MCF 10A (cell line): ENCODE measurements at regions of chr2 and their contacts with region 1.

Region 1: GRCh38 chr2:24435391-24436316 is 55.4 kb upstream of the NCOA1 start:
- DNase-seq: no peak
- H3K4me3 Mint-ChIP-seq: no peak overlapping the region
- H3K27ac Mint-ChIP-seq: no peak overlapping the region
- H3K4me1 Mint-ChIP-seq: no peaks in the 10 kb centered on the region
- H3K27me3 Mint-ChIP-seq: no peaks in the 10 kb centered on the region
- CTCF ChIP-seq: no peak

Region 2: DNA sequence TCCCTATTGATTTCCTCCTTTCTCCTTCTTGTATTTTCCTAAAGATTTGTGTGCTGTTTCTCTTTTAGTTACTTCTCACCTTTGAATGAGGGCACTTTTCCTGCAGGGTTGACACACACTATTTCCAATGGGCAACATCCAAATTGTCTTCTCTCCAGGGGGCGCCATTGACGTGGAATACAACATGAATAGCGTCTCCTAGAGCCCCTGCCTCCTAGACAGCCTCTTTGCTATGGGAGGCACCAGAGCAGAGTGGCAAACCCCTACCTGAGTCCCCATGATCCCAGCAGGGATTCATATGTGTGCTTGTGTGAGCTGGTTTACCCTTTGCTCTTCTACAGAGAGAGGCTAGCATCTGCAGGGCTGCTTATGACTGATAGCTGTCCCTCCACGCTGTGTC is 14.0 kb before region 1 on chr2:
- CTCF ChIA-PET with region 1: interaction called, 10 read pairs
- POLR2A ChIA-PET with region 1: interaction called, 4 read pairs
- intact Hi-C with region 1: no loop called
- DNase-seq: peak; percentile 75
- H3K4me3 Mint-ChIP-seq: no peak overlapping the region
- H3K27ac Mint-ChIP-seq: no peak overlapping the region
- H3K4me1 Mint-ChIP-seq: no peaks in the 10 kb centered on the region
- H3K27me3 Mint-ChIP-seq: no peaks in the 10 kb centered on the region
- CTCF ChIP-seq: peak; percentile 39

Region 3: DNA sequence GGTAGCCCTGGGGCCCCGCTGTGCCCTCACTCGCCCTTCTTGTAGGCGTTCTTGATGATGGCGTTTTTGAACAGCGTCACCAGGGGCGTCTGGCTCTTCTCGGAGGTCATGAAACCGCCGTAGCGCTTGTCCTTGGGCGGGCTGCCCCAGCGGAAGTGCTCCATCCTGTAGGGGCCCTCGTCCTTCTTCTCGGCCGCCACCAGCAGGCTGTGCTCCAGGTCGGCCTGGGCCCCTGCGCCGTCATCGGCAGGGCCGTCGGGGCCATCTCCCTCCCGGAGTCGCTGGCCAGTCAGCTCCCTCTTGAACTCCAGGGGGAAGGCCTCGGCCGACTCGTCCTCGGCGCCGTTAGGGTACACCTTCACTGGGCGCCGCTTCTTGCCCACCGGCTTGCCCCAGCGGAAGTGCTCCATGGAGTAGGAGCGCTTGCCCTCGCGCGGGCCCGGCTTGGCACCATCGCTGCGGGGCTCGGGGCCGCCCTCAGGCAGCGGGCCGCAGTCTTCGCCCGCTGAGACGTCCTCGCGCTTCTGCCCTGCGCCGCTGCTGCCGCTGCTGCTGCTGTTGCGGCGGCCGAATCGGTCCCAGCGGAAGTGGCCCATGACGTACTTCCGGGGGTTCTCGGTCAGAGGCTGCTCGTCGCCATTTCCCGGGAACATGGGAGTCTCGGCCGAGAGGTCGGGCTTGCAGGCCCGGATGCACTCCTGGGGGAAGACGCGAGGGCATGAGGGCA is 725.6 kb after region 1 on chr2:
- CTCF ChIA-PET with region 1: no interaction called
- POLR2A ChIA-PET with region 1: no interaction called
- intact Hi-C with region 1: no loop called
- DNase-seq: no peak
- H3K4me3 Mint-ChIP-seq: no peak overlapping the region
- H3K27ac Mint-ChIP-seq: no peak overlapping the region
- H3K4me1 Mint-ChIP-seq: no peaks in the 10 kb centered on the region
- H3K27me3 Mint-ChIP-seq: peaks cover 18% of the 10 kb centered on the region
- CTCF ChIP-seq: no peak